ENCODE measurements at regions of chrX and their contacts with region 1.

Region 1: GRCh38 chrX:118862091-118862490 is 38.5 kb downstream of the ZCCHC12 start:
- DNase-seq: no peak
- ATAC-seq: no peak
- H3K4me3 ChIP-seq: no peak overlapping the region
- H3K27ac ChIP-seq: no peak overlapping the region
- H3K4me1 ChIP-seq: no peaks in the 10 kb centered on the region
- H3K27me3 ChIP-seq: no peaks in the 10 kb centered on the region; a peak in 1 of 4 replicates
- CTCF ChIP-seq: no peak
- EP300 ChIP-seq: no peak
- POLR2A ChIP-seq: no peak
- RAD21 ChIP-seq: no peak

Region 2: DNA sequence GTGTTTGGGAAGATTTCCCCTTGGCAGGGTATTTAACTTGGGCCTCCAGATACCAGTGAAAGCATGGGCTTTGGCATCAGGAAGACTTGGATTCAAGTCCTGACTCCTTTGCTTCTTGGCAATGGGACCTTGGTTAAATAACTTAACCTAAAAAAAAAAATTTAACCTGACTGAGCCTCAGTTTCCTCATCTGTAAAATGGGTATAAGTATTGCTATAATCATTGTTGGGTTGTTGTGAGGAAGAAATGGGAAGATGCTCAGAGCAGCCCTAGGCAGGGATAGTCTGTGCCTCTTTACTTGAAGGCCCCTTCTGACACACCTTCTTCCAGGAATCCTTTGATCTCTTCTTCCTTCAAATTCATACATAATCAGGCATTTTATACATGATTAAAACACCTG is 31.8 kb after region 1 on chrX:
- CTCF ChIA-PET with region 1: no interaction called
- POLR2A ChIA-PET with region 1: no interaction called
- RAD21 ChIA-PET with region 1: no interaction called
- SMC1A ChIA-PET with region 1: no interaction called
- in situ Hi-C with region 1: no loop called
- intact Hi-C with region 1: no loop called
- DNase-seq: no peak
- ATAC-seq: no peak
- H3K4me3 ChIP-seq: no peak overlapping the region
- H3K27ac ChIP-seq: no peak overlapping the region
- H3K4me1 ChIP-seq: no peaks in the 10 kb centered on the region
- H3K27me3 ChIP-seq: no peaks in the 10 kb centered on the region
- CTCF ChIP-seq: no peak
- EP300 ChIP-seq: no peak
- POLR2A ChIP-seq: no peak
- RAD21 ChIP-seq: no peak

Region 3: DNA sequence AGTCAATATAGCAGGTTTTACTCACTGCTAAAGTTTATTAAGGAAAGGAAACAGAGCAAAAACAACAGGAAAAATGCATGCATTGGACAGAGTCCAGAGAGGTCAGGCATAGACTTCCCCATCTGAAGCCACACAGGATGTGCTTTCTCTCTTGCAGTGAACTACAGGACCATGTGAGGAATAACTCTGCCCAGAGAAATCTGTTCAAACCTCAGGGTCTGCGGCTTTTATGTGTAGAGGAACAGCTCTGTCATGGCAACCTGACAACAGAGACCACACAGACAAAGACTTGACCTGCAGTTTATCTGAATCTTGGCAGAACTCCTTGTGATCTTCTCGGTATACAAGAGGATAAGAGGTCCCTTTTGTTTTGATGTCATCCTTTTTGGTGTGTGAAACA is 66.1 kb after region 1 on chrX:
- CTCF ChIA-PET with region 1: no interaction called
- POLR2A ChIA-PET with region 1: no interaction called
- RAD21 ChIA-PET with region 1: no interaction called
- SMC1A ChIA-PET with region 1: no interaction called
- in situ Hi-C with region 1: no loop called
- intact Hi-C with region 1: loop called (anchors 10 kb)
- DNase-seq: no peak
- ATAC-seq: no peak
- H3K4me3 ChIP-seq: no peak overlapping the region
- H3K27ac ChIP-seq: no peak overlapping the region
- H3K4me1 ChIP-seq: no peaks in the 10 kb centered on the region
- H3K27me3 ChIP-seq: no peaks in the 10 kb centered on the region
- CTCF ChIP-seq: no peak
- EP300 ChIP-seq: no peak
- POLR2A ChIP-seq: no peak
- RAD21 ChIP-seq: no peak